Activated CD4-positive, alpha-beta T cell treated with anti-CD3 and anti-CD28 coated beads for 36 hours (primary cell): ENCODE measurements at regions of chr9 and their contacts with region 1.

Region 1: DNA sequence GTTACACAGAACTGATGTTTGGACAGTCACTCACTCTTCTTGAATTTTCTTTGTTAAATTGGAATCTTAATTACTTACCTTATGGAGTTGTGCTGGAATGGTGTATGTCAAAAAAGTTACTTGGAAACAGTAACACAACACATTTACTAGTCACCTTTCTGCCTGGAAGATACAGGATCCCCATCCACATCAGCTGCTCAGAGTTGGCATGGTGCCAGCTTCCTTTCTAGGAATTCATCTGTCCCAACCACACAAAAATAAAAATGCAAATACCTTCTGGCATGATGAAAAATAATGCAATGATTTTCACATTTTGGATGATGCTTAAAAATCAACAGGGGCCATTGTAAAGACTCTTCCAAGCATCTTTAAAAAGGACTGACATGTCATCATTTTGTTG is 341.5 kb downstream of the TMEM38B start:
- DNase-seq: no peak
- ATAC-seq: no peak
- H3K4me3 Mint-ChIP-seq: no peak overlapping the region
- H3K27ac Mint-ChIP-seq: no peak overlapping the region
- H3K4me1 Mint-ChIP-seq: no peaks in the 10 kb centered on the region
- H3K27me3 Mint-ChIP-seq: no peaks in the 10 kb centered on the region

Region 2: DNA sequence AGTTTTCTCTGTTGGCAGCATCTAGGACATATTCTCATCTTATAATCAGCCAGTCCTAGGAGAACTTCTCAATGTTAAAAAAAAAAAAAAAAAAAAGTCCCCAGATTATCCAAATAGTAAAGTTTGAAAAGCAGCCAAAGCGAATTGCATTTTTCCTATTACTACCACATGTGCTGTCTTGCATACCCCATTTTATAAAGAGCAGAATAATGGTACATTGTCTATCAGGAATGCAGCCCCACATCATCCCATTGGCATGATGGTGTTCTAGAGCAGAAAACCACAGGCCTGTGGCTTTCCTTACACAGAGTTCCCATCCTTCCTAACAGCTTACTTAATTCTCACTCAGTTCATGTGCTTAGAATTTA is 40.1 kb after region 1 on chr9:
- CTCF ChIA-PET with region 1: no interaction called
- POLR2A ChIA-PET with region 1: no interaction called
- intact Hi-C with region 1: no loop called
- DNase-seq: no peak
- ATAC-seq: no peak
- H3K4me3 Mint-ChIP-seq: no peak overlapping the region
- H3K27ac Mint-ChIP-seq: no peak overlapping the region
- H3K4me1 Mint-ChIP-seq: no peaks in the 10 kb centered on the region
- H3K27me3 Mint-ChIP-seq: no peaks in the 10 kb centered on the region

Region 3: DNA sequence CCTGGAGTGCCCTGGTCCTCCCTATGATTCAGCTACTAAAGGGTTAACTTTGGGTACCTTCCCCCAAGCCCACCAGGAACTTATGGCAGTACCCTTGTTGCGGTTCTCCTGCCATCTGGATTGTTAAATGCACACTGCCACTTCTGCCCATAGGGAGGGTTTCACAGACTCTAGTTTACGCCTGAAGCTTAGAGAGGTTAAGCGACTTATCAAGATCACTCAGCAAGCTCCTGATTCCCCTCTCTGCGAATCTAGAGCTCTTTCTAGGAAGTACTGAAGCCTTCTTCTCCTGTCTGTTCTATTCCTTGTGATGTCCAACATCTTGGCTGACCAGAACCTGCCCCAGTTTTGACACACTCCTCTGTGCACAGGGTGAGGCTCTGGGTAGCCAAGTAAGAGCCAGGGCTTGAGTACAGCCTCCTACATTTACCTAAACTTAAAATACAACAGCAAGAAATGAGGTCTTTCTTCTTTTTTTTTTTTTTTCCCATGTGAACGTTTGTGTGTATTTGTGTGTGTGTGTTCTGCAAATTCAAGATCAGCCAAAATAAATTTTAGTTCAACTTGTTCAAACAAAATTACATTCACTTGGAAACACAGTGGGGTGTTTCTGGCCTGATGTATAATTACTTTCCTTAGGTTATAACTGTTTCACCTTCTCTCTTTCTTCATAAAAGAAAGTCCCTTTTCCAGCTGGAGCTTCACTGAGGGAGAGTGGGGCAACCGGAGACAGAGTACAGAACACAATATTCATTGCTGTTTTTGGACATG is 1482.4 kb after region 1 on chr9:
- CTCF ChIA-PET with region 1: no interaction called
- POLR2A ChIA-PET with region 1: interaction called, 11 read pairs
- intact Hi-C with region 1: no loop called
- DNase-seq: no peak
- ATAC-seq: no peak
- H3K4me3 Mint-ChIP-seq: no peak overlapping the region
- H3K27ac Mint-ChIP-seq: no peak overlapping the region
- H3K4me1 Mint-ChIP-seq: no peaks in the 10 kb centered on the region
- H3K27me3 Mint-ChIP-seq: no peaks in the 10 kb centered on the region